ENCODE measurements at regions of chr11 and their contacts with region 1.

Region 1: GRCh38 chr11:44893846-44894617 is 56.7 kb downstream of the TP53I11 start:
- DNase-seq: no peak
- H3K4me3 ChIP-seq: no peak overlapping the region
- CTCF ChIP-seq: peak; percentile 99

Region 2: DNA sequence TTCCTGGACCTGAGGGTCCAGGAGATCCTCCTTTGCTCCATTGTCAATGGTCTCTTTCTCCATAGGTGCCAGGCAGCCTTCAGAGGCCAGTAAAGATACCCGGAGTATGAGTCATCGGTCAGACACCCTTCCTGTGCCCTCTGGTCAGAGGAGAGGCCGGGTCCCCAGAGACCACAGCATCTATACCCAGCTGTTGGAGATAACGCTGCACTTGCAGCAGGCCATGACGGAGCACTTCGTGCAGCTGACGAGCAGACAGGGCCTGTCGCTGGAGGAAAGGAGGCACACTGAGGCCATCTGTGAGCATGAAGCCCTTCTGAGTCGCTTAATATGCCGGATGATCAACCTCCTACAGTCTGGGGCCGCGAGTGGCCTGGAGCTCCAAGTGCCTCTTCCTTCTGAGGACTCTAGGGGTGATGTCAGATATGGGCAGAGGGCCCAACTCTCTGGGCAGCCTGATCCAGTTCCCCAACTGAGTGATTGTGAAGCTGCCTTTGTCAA is 846.1 kb before region 1 on chr11 and contains the start of gene ACCSL:
- CTCF ChIA-PET with region 1: no interaction called
- POLR2A ChIA-PET with region 1: no interaction called
- DNase-seq: no peak
- H3K4me3 ChIP-seq: no peak within 1 kb of the TSS
- CTCF ChIP-seq: no peak

Region 3: GRCh38 chr11:44726283-44727113 is 167.5 kb before region 1 on chr11 and contains the start of gene TSPAN18:
- CTCF ChIA-PET with region 1: interaction called, 35 read pairs
- POLR2A ChIA-PET with region 1: no interaction called
- DNase-seq: no peak
- H3K4me3 ChIP-seq: peak within 1 kb of the TSS; percentile 75
- CTCF ChIP-seq: no peak

Region 4: DNA sequence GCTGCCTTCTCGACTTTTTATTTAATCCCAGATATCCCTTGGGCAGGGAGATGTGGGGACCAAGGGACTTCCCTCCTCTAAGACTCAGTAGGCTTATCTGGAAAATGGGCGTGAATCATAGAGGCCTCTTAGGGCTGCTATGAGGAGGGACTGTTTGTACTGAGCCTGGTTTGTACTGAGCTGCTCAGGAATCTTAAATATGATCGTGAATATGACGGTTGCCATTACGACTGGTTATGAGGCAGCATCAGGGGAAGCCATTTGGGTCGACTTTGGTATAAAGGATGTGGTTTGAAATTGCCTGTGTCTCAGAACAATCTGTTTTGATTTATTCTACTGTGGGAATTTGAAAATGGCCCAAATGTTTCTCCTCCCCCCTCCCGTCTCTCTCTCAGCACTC is 146.7 kb before region 1 on chr11:
- CTCF ChIA-PET with region 1: interaction called, 17 read pairs
- POLR2A ChIA-PET with region 1: no interaction called
- DNase-seq: no peak
- H3K4me3 ChIP-seq: no peak overlapping the region
- CTCF ChIP-seq: no peak

Region 5: DNA sequence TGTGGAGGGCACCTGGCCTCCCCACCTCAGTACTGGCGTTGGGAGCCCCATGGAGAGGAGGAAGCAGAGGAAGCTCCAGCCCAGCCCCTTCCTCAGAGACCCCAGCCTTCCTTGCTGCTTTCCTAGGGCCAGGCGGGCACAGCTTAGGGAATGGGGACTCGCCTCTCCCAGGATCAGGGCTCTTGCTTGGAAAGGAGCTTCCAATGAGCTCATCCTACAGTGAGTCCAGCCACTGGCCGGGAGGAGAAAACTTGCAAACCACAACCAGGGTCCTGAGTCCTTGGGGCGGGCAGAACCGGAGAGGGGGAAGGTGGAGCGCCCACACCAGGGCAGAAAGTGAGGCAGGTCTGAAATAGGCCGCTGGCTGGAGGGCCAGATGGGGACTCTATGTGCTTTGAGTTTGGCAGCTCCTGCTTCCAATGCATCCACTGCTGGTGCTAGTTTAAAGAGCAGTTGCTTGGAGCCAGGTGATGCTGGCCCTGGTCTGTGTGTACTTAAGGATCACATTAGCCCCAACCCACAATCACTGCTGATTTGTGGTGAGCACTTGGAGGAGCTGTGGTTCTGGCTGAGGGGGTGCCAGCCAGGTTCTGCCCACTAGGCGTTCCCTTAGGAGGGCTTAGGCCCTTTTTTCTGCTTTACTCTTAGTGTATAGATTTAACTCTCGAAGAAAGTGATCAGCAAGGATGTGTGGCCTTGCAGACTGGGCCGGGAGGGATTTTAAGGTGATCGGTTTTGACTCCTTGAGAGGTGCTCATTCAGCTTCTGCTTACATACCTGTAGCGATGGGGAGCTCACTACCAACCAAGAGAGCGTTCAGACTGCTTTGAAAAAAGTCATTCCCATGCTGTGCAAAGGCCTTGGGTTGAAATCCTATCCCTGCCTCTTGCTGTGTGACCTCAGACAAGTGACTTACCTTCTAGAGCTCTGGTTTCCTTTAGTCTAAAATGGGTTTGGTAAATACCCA is 25.3 kb before region 1 on chr11:
- CTCF ChIA-PET with region 1: interaction called, 10 read pairs
- POLR2A ChIA-PET with region 1: no interaction called
- DNase-seq: no peak
- H3K4me3 ChIP-seq: no peak overlapping the region
- CTCF ChIP-seq: no peak

Region 6: DNA sequence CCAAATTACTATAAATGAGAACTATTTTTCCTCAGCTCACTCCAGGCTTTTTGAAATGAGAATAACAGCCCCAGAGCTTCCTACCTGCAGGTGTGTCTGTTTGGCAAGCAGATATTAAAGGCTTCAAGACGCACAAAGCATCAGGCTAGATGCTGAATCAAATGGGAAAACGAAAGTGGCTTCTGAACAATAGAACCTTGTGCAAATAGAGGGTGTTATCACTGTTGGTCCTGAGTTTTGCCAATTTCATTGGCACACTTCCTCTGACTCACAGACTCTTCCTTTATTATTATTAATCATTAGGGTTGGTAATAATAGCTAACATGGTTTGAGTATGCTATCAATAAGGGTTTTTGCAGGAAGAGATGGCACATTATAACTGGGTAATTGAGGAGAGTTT is 378.7 kb after region 1 on chr11:
- CTCF ChIA-PET with region 1: no interaction called
- POLR2A ChIA-PET with region 1: no interaction called
- DNase-seq: no peak
- H3K4me3 ChIP-seq: no peak overlapping the region
- CTCF ChIP-seq: no peak

Measured in AG04449 (cell line).